ENCODE measurements at regions of chr16 and their contacts with region 1.

Region 1: DNA sequence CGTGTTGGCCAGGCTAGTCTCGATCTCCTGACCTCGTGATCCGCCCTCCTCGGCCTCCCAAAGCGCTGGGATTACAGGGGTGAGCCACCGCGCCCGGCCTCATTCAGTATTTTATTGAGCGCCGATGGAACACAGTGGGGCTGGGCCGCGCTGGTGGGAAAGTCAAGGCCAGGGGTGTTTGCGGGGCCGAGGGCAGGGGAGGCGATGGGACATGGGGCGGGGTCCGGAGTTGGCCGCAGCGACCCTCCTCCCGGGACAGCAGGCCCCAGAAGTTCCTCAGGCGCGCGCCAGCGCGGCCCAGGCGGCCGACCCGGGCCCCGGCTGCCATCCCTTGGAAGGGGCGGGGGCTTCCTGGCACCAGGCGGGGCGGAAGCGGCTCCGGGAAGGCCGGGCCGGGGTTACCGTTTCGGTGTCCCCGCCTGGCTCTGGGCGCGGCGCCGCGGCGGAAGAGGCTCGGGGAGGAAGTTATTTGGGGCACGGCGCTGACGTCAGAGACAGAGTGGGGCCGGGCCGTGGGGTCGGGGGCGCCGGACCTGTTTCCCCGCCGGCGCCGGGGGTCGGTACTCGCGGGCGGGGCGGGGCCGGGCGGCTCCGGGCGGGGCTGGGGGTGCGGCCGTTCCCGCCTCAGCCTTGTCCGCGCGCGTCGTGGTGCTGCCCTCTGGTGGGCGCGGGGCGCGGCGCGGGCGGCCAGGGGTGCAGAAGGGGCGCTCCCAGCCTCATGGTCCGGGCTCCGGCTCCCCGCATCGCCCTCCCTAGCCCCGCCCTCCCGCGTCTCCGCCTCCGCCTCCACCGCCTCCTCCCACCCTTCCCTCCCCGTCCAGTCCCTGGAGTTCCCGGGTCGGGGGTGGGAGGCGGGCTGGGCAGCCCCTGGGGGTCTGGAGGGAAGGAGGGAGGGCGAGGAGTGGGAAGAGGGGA is 952 bp upstream of the PRSS27 start:
- DNase-seq: peak; percentile 95
- H3K4me3 ChIP-seq: peak overlapping the region; percentile 72 to 86 (median 80)
- H3K27ac ChIP-seq: peak overlapping the region; percentile 73 to 83 (median 78)
- H3K4me1 ChIP-seq: peaks cover 11 to 30% (median 23%) of the 10 kb centered on the region in 4 donors
- H3K27me3 ChIP-seq: peaks cover 0 to 22% (median 2%) of the 10 kb centered on the region in 4 donors
- CTCF ChIP-seq: peak in 2 of 3 experiments; percentile 64 to 81
- EP300 ChIP-seq: no peak
- POLR2A ChIP-seq: peak; percentile 17

Region 2: DNA sequence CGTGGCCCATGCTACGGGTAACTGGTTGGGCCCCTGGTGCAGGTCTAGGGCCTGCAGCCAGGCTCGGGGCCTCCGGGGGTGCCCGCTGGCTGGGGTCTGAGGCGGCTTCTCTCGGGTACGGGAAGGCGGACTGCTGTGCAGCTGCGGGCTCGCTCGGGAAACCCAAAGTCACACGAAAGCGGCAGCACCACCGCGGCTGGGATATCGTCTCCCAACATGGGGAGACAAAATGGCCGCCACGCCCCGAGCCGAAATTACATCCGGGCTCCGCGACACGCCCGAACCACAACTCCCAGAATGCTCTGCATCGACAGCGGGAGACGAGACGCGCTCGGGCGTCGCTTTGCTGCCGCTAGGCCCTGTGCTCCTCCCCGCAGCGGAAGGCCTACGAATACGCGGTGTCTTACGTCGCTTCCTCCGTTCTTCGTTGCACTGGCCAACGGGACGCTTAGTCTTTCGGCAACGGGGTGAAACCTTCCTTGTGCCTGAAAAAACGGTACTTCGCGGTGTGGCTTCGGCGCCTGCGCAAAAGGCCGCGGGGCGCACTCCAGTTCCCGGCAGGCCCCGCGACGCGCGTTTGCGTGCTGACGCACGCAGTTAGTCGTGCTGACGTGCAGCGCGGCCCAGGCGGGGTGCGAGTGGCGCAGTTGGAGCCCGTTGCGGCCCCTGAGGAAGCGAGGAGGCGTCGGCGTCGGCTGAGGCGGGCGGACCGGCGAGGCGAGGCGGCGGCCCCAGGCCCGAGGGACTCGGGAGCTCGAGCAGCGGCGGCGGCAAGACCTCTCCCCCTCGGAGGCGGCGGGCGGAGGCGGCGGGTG is 31.3 kb after region 1 on chr16 and contains the start of gene SRRM2:
- intact Hi-C with region 1: loop called (anchors 2 kb)
- DNase-seq: peak; percentile 99
- H3K4me3 ChIP-seq: peak within 1 kb of the TSS; percentile 74 to 95 (median 88)
- H3K27ac ChIP-seq: peak within 1 kb of the TSS; percentile 98 to 100 (median 100)
- H3K4me1 ChIP-seq: peaks cover 42 to 51% (median 47%) of the 10 kb centered on the region in 4 donors
- H3K27me3 ChIP-seq: no peaks in the 10 kb centered on the region
- CTCF ChIP-seq: peak in 1 of 3 experiments; percentile 7
- EP300 ChIP-seq: no peak
- POLR2A ChIP-seq: peak; percentile 99
- total RNA-seq, gene SRRM2: 126 to 325 (median 234) TPM

Region 3: GRCh38 chr16:2853531-2854073 is 132.6 kb after region 1 on chr16:
- intact Hi-C with region 1: no loop called
- DNase-seq: no peak
- H3K4me3 ChIP-seq: no peak overlapping the region
- H3K27ac ChIP-seq: no peak overlapping the region
- H3K4me1 ChIP-seq: peaks cover 0 to 13% (median 5%) of the 10 kb centered on the region in 4 donors
- H3K27me3 ChIP-seq: peaks cover 0 to 87% (median 26%) of the 10 kb centered on the region in 4 donors
- CTCF ChIP-seq: no peak
- EP300 ChIP-seq: no peak
- POLR2A ChIP-seq: no peak

Measured in esophagus muscularis mucosa (tissue), 4 donors.